IMR-90 (cell line): ENCODE measurements at regions of chr3 and their contacts with region 1.

Region 1: DNA sequence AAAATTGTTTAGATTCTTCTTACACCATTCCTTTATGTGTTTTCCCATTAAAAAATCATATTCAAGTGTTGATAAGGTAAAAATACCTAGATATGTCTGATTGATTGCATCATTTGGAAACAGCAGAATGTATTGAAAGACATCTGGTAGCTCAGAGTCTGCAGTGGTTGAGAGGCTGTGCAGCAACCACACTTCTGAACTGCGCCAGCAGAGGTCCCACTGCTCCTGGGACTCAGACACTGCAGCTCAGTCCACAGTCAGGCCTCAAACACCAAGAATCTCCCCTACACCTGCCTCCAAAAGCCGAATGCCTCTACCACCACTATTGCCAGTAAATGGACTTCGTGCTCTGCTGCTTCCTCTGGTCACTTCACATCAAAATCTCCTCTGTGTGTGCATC is 176.9 kb upstream of the LMCD1 start:
- DNase-seq: peak; percentile 27
- ATAC-seq: peak; percentile 89
- H3K4me3 ChIP-seq: no peak overlapping the region
- H3K27ac ChIP-seq: no peak overlapping the region
- H3K4me1 ChIP-seq: peaks cover 4% of the 10 kb centered on the region; the same call in 1 of the 2 replicates
- H3K27me3 ChIP-seq: peaks cover 5% of the 10 kb centered on the region; the same call in 1 of the 2 replicates
- CTCF ChIP-seq: peak; percentile 48
- POLR2A ChIP-seq: no peak
- RAD21 ChIP-seq: peak; percentile 45; the same call in 1 of the 2 replicates

Region 2: DNA sequence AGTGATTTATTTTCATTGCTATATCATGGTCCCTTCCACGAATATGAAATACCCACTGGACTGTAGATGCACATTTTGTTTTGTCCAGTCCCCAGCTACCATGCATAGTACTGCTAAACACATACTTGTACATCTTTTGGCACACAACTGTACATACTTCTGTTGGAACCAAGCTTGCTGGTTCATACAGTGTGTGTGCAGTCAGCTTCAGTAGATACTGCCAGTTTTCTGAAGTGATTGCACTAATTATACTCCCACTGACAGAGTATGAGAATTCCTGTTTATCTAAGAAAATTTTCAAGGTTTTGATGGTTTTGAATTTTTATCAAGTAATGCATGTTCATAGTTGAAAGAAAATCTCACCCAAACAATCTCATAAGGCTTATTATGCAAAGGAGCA is 76.2 kb after region 1 on chr3:
- CTCF ChIA-PET with region 1: interaction called, 11 read pairs
- POLR2A ChIA-PET with region 1: no interaction called
- dilution Hi-C with region 1: no loop called
- in situ Hi-C with region 1: no loop called
- intact Hi-C with region 1: no loop called
- DNase-seq: no peak
- ATAC-seq: no peak
- H3K4me3 ChIP-seq: no peak overlapping the region
- H3K27ac ChIP-seq: no peak overlapping the region
- H3K4me1 ChIP-seq: no peaks in the 10 kb centered on the region
- H3K27me3 ChIP-seq: no peaks in the 10 kb centered on the region
- CTCF ChIP-seq: no peak
- POLR2A ChIP-seq: no peak
- RAD21 ChIP-seq: no peak

Region 3: DNA sequence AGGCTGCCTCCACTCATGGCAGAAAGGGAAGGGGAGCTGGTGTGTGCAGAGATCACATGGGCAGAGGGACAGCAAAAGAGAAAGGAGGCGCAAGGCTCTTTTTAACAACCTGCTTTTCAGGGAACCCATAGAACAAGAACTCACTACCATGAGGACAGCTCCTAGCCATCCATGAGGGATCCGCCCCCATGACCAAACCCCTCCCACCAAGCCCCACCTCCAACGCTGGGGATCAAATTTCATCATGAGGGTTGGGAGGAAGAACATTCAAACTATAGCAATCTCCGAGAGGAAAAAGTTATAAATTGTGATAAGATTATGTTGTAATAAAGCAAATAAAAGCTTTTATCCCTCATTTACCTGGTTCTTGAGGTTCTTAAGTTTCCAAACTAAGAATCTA is 92.2 kb after region 1 on chr3:
- CTCF ChIA-PET with region 1: interaction called, 7 read pairs
- POLR2A ChIA-PET with region 1: no interaction called
- dilution Hi-C with region 1: no loop called
- in situ Hi-C with region 1: no loop called
- intact Hi-C with region 1: loop called (anchors 1 kb)
- DNase-seq: peak; percentile 12
- ATAC-seq: peak; percentile 78
- H3K4me3 ChIP-seq: no peak overlapping the region
- H3K27ac ChIP-seq: no peak overlapping the region
- H3K4me1 ChIP-seq: no peaks in the 10 kb centered on the region
- H3K27me3 ChIP-seq: peaks cover 5% of the 10 kb centered on the region; the same call in 1 of the 2 replicates
- CTCF ChIP-seq: no peak
- POLR2A ChIP-seq: no peak
- RAD21 ChIP-seq: no peak

Region 4: GRCh38 chr3:8622873-8623691 is 298.3 kb after region 1 on chr3:
- CTCF ChIA-PET with region 1: no interaction called
- POLR2A ChIA-PET with region 1: no interaction called
- dilution Hi-C with region 1: no loop called
- in situ Hi-C with region 1: no loop called
- intact Hi-C with region 1: loop called (anchors 5 kb)
- DNase-seq: peak; percentile 70
- ATAC-seq: peak; percentile 91
- H3K4me3 ChIP-seq: no peak overlapping the region
- H3K27ac ChIP-seq: no peak overlapping the region
- H3K4me1 ChIP-seq: peaks cover 32% of the 10 kb centered on the region
- H3K27me3 ChIP-seq: no peaks in the 10 kb centered on the region; the same call in 1 of the 2 replicates
- CTCF ChIP-seq: peak; percentile 94
- POLR2A ChIP-seq: no peak
- RAD21 ChIP-seq: peak; percentile 94